Psoas muscle (tissue), 8 donors: ENCODE measurements at regions of chr15 and their contacts with region 1.

Region 1: GRCh38 chr15:45198337-45199135 is 10.8 kb upstream of the SHF start:
- DNase-seq: peak; percentile 92 to 96
- ATAC-seq: peak; percentile 79 to 83 (median 81)
- H3K4me3 ChIP-seq: peak overlapping the region; percentile 91
- H3K27ac ChIP-seq: peak overlapping the region; percentile 99
- H3K4me1 ChIP-seq: peaks cover 3% of the 10 kb centered on the region
- H3K27me3 ChIP-seq: no peaks in the 10 kb centered on the region
- CTCF ChIP-seq: peak; percentile 68

Region 2: DNA sequence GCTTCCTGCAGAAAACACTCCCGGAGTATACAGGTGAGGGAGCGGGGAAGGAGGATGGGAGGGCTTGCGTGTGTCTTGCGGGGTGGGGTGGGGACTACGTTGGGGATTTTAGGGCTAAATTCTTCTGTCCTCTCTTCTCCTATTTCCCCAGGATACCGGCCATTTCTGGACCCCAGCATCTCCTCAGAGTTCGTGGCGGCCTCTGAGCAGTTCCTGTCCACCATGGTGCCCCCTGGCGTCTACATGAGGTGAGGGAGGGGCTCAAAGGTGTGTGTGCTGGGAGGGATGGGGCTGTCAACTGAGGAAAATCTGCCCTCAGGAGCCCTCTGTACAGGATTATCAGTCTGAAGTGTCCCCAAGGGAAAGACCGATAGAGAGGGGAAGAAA is 62.2 kb before region 1 on chr15:
- intact Hi-C with region 1: no loop called
- DNase-seq: no peak
- ATAC-seq: no peak
- H3K4me3 ChIP-seq: no peak overlapping the region
- H3K27ac ChIP-seq: no peak overlapping the region
- H3K4me1 ChIP-seq: peaks cover 3% of the 10 kb centered on the region
- H3K27me3 ChIP-seq: peaks cover 0 to 38% (median 16%) of the 10 kb centered on the region in 3 donors
- CTCF ChIP-seq: no peak

Region 3: GRCh38 chr15:45268135-45268534 is 69.6 kb after region 1 on chr15:
- intact Hi-C with region 1: no loop called
- DNase-seq: no peak
- ATAC-seq: no peak
- H3K4me3 ChIP-seq: no peak overlapping the region
- H3K27ac ChIP-seq: no peak overlapping the region
- H3K4me1 ChIP-seq: no peaks in the 10 kb centered on the region
- H3K27me3 ChIP-seq: no peaks in the 10 kb centered on the region
- CTCF ChIP-seq: no peak

Region 4: GRCh38 chr15:45279024-45279698 is 80.6 kb after region 1 on chr15:
- intact Hi-C with region 1: loop called (anchors 2 kb)
- DNase-seq: peak; percentile 97 to 99
- ATAC-seq: peak; percentile 100
- H3K4me3 ChIP-seq: peak overlapping the region; percentile 89
- H3K27ac ChIP-seq: peak overlapping the region; percentile 87
- H3K4me1 ChIP-seq: peaks cover 11% of the 10 kb centered on the region
- H3K27me3 ChIP-seq: no peaks in the 10 kb centered on the region
- CTCF ChIP-seq: no peak

Region 5: DNA sequence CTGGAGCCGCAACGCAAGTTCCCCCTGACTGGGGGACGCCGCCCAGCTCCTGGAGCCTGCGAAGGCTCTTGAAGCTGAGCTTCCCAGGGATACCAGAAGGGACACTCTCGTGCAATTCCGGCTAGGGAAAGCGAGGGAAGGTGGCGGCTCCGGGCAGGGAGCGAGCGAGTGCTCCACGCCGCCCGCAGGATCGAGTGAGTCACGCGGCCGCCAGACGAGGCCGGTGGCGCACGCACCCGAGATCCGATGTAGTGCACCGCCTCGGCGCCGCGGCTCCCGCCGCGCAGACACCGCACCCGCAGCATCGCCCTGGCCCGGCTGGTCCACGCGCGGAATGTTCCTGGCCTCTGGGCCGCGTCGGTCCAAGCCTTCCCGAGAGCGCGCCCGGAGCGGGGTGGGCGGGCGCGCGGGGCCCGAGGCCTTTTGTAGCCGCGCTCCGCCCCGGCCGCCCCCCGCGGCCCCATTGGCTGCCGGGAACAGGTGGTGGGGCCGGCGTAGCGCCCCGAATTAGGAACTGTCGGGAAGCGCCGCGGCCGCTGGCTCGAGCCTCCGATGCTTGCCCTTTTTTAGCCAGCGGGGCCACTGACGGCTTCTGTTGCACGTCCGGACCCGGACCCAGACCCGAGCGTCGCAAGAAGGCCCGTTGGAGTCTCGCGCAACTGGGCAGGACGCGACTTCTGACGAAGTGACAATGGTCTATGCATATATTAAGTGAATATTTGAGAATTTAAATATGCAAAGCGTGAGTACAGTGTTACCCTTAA is 179.8 kb after region 1 on chr15 and contains the start of gene GATM:
- intact Hi-C with region 1: loop called (anchors 5 to 10 kb)
- DNase-seq: peak; percentile 84 to 91
- ATAC-seq: peak; percentile 90 to 95 (median 92)
- H3K4me3 ChIP-seq: peak within 1 kb of the TSS; percentile 86
- H3K27ac ChIP-seq: peak within 1 kb of the TSS; percentile 87
- H3K4me1 ChIP-seq: peaks cover 16% of the 10 kb centered on the region
- H3K27me3 ChIP-seq: no peaks in the 10 kb centered on the region
- CTCF ChIP-seq: peak; percentile 45
- total RNA-seq, gene GATM: 20.8 to 41.3 (median 26.2) TPM